Pancreas (tissue), 10 donors: ENCODE measurements at regions of chrX and their contacts with region 1.

Region 1: DNA sequence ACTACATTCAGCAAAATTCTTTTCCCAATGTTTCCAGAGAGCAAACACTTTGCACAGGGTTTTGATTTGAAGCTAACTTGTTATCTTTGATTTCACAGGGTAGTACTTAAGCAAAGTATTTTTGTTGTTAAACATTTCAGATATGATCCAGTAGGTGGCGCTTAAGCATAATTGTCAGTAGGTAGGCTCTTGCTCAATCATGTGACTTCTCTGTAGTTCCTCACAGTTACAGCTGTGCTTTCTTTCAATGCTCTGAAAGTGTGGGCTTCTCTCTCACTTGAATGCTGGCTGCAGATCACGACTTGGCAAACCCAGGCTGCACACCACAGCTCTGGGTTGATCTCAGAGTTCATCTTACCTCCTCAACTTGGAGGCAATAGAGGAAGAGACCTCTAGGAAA is 1016.5 kb downstream of the SH3BGRL start:
- DNase-seq: no peak
- ATAC-seq: peak; percentile 56 to 89 (median 77)
- H3K4me3 ChIP-seq: no peak overlapping the region
- H3K27ac ChIP-seq: no peak overlapping the region
- H3K4me1 ChIP-seq: no peaks in the 10 kb centered on the region
- H3K27me3 ChIP-seq: no peaks in the 10 kb centered on the region
- CTCF ChIP-seq: peak in 3 of 4 donors; percentile 37 to 39 (median 37)

Region 2: DNA sequence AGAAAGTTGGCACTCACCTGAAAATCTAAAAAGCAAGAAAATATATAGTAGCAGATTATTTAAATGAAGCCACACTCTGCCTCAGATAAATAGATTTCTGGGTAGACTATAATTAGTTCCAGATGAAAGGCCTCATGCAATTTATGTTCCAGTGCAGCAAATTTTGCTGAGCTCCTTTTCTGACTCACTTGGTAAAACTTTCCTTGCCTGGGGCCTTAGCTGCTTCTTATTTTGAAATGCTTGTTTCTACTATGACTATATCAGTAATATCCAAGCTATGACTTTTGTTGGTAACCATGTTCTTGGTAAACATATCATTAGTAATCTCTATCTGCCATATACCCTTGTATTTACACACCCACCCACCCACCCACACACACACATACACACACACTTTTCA is 54.7 kb before region 1 on chrX:
- intact Hi-C with region 1: no loop called
- DNase-seq: no peak
- ATAC-seq: no peak
- H3K4me3 ChIP-seq: no peak overlapping the region
- H3K27ac ChIP-seq: no peak overlapping the region
- H3K4me1 ChIP-seq: no peaks in the 10 kb centered on the region
- H3K27me3 ChIP-seq: no peaks in the 10 kb centered on the region
- CTCF ChIP-seq: no peak

Region 3: DNA sequence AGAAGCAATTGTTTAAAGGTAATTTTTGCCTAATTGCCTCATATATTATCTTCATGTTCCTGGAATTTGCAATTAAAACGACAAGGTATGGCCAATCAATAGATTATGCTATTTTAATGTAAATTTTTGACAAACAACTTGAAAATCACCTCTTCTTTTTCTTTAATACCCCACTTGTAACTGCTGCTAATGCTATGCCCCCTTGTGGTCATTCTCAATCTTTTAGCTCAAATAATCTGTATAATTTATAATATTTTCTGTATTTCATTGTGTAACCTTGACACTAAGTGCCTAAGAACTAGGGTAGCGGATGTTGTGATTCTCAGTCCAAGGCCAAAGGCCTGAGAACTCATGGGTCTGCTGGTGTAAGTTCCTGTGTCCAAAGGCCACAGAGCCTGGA is 458.0 kb after region 1 on chrX:
- intact Hi-C with region 1: loop called in 1 of 3 experiments (anchors 10 kb)
- DNase-seq: no peak
- ATAC-seq: no peak
- H3K4me3 ChIP-seq: no peak overlapping the region
- H3K27ac ChIP-seq: no peak overlapping the region
- H3K4me1 ChIP-seq: no peaks in the 10 kb centered on the region
- H3K27me3 ChIP-seq: no peaks in the 10 kb centered on the region
- CTCF ChIP-seq: peak in 2 of 4 donors; percentile 22 to 29